Thyroid gland (tissue), 4 donors: ENCODE measurements at regions of chr5 and their contacts with region 1.

Region 1: GRCh38 chr5:151164686-151165392 is 7.3 kb upstream of the ANXA6 start:
- DNase-seq: peak; percentile 75 to 78
- H3K4me3 ChIP-seq: no peak overlapping the region
- H3K27ac ChIP-seq: no peak overlapping the region
- H3K4me1 ChIP-seq: peaks cover 0 to 3% of the 10 kb centered on the region in 2 donors
- H3K27me3 ChIP-seq: no peaks in the 10 kb centered on the region
- CTCF ChIP-seq: peak; percentile 63 to 91 (median 90)
- POLR2A ChIP-seq: no peak

Region 2: GRCh38 chr5:150801117-150801927 is 363.5 kb before region 1 on chr5:
- intact Hi-C with region 1: loop called (anchors 5 kb)
- DNase-seq: peak in 1 of 2 donors; percentile 23
- H3K4me3 ChIP-seq: peak overlapping the region in 1 of 3 donors; percentile 14
- H3K27ac ChIP-seq: peak overlapping the region in 1 of 3 donors; percentile 8
- H3K4me1 ChIP-seq: peaks cover 0 to 3% of the 10 kb centered on the region in 2 donors
- H3K27me3 ChIP-seq: no peaks in the 10 kb centered on the region
- CTCF ChIP-seq: peak in 5 of 6 experiments; percentile 38 to 75 (median 43)
- POLR2A ChIP-seq: no peak

Region 3: DNA sequence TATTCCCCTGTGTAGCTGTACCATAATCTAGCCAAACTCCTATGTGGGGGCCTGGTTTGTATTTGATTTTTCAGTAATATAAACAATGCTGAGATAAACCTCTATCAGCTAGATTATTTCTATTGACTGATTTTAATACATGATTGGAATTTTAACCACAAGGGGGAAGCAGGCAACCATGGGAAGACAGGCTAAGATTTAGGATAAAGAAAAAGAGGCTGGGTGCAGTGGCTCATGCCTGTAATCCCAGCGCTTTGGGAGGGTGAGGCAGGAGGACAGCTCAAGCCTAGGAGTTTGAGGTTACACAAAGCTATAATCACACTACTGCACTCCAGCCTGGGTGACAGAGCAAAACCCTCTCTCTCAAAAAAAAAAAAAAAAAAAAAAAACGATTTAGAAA is 162.6 kb before region 1 on chr5:
- intact Hi-C with region 1: loop called (anchors 5 kb)
- DNase-seq: peak; percentile 40
- H3K4me3 ChIP-seq: no peak overlapping the region
- H3K27ac ChIP-seq: no peak overlapping the region
- H3K4me1 ChIP-seq: peaks cover 29 to 52% of the 10 kb centered on the region in 2 donors
- H3K27me3 ChIP-seq: no peaks in the 10 kb centered on the region
- CTCF ChIP-seq: peak; percentile 19 to 87 (median 67)
- POLR2A ChIP-seq: no peak

Region 4: GRCh38 chr5:151051066-151051930 is 113.5 kb before region 1 on chr5:
- intact Hi-C with region 1: loop called (anchors 5 kb)
- DNase-seq: peak; percentile 85 to 86
- H3K4me3 ChIP-seq: no peak overlapping the region
- H3K27ac ChIP-seq: peak overlapping the region in 1 of 3 donors; percentile 62
- H3K4me1 ChIP-seq: peaks cover 7 to 35% of the 10 kb centered on the region in 2 donors
- H3K27me3 ChIP-seq: no peaks in the 10 kb centered on the region
- CTCF ChIP-seq: peak; percentile 57 to 92 (median 83)
- POLR2A ChIP-seq: peak in 1 of 2 donors; percentile 31

Region 5: DNA sequence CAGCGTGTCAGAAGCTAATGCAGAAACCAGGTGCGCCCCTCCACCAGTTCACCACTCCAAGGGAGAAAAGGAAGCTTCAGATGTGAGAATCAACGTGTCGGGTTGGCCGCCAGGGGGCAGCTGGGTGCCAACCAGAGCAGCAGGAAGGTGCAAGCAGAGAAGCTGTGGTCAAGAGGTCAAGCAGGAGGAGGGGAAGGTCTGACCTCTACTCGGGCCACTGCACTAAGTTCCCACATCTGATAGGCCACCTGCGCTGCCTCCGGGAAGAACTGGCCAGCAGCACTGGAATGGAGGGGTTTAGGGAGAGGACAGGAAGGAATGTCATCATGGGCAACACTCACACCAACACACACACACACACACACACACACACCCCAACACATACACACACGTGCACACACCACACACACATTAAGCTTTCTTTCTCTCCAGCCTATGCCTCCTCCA is 38.6 kb before region 1 on chr5:
- intact Hi-C with region 1: loop called (anchors 2 kb)
- DNase-seq: peak; percentile 69
- H3K4me3 ChIP-seq: no peak overlapping the region
- H3K27ac ChIP-seq: no peak overlapping the region
- H3K4me1 ChIP-seq: peaks cover 3 to 21% of the 10 kb centered on the region in 2 donors
- H3K27me3 ChIP-seq: no peaks in the 10 kb centered on the region
- CTCF ChIP-seq: peak; percentile 54 to 73 (median 70)
- POLR2A ChIP-seq: no peak

Region 6: DNA sequence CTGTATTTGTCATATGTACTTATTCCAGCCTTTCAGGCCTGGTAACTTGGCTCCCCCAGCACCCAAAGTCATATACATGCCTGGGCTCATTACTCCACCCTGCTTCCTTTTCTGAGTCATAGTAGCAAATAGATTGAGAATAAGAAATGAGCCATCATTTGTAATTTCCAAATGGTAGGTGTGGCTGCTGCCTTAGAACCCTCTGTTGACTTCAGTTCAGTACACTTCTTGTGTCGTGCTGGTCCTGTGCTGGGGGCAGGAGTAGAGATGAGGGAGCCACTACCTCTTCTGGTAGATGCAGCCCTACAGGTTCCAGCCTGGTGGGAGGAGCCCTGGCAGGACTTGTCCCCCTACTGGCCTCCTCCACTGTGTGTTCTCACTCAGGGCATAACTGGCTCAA is 99.3 kb after region 1 on chr5:
- intact Hi-C with region 1: no loop called
- DNase-seq: no peak
- H3K4me3 ChIP-seq: no peak overlapping the region
- H3K27ac ChIP-seq: no peak overlapping the region
- H3K4me1 ChIP-seq: no peaks in the 10 kb centered on the region
- H3K27me3 ChIP-seq: no peaks in the 10 kb centered on the region
- CTCF ChIP-seq: no peak
- POLR2A ChIP-seq: no peak